ENCODE measurements at regions of chr5 and their contacts with region 1.

Region 1: GRCh38 chr5:122019919-122020590 is 58.0 kb downstream of the LOX start:
- DNase-seq: no peak
- H3K4me3 Mint-ChIP-seq: no peak overlapping the region
- H3K27ac Mint-ChIP-seq: no peak overlapping the region
- H3K4me1 Mint-ChIP-seq: peaks cover 9% of the 10 kb centered on the region
- H3K27me3 Mint-ChIP-seq: no peaks in the 10 kb centered on the region

Region 2: GRCh38 chr5:121976979-121977378 is 43.1 kb before region 1 on chr5:
- CTCF ChIA-PET with region 1: no interaction called
- intact Hi-C with region 1: loop called (anchors 1 kb)
- DNase-seq: no peak
- H3K4me3 Mint-ChIP-seq: no peak overlapping the region
- H3K27ac Mint-ChIP-seq: no peak overlapping the region
- H3K4me1 Mint-ChIP-seq: peaks cover 38% of the 10 kb centered on the region
- H3K27me3 Mint-ChIP-seq: no peaks in the 10 kb centered on the region

Region 3: GRCh38 chr5:121987685-121988073 is 32.4 kb before region 1 on chr5:
- CTCF ChIA-PET with region 1: interaction called, 4 read pairs
- intact Hi-C with region 1: loop called (anchors 1 kb)
- DNase-seq: no peak
- H3K4me3 Mint-ChIP-seq: no peak overlapping the region
- H3K27ac Mint-ChIP-seq: no peak overlapping the region
- H3K4me1 Mint-ChIP-seq: peaks cover 15% of the 10 kb centered on the region
- H3K27me3 Mint-ChIP-seq: no peaks in the 10 kb centered on the region

Region 4: DNA sequence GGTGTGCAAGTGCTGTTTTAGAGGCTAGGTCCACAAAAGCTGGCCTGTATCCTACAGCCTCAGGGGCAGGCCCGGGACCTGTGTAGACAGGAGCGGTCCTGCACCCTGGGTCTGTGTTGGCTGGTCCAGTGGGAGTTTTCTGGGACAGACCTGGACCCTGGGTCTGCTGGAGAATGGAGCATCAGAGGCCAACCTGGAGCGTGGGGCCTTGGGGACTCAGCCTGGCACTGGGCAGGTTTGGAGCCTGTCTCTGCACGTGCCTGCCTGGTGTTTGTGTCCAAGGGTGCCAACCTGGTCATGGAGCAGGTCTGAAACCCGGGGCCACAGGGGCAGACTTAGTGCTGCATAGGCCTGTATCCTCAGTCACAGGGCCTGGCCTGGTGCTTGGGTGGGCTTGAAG is 12.5 kb before region 1 on chr5:
- CTCF ChIA-PET with region 1: no interaction called
- intact Hi-C with region 1: loop called (anchors 1 kb)
- DNase-seq: no peak
- H3K4me3 Mint-ChIP-seq: no peak overlapping the region
- H3K27ac Mint-ChIP-seq: no peak overlapping the region
- H3K4me1 Mint-ChIP-seq: peaks cover 24% of the 10 kb centered on the region
- H3K27me3 Mint-ChIP-seq: no peaks in the 10 kb centered on the region

Region 5: GRCh38 chr5:122180863-122181548 is 161.0 kb after region 1 on chr5:
- CTCF ChIA-PET with region 1: no interaction called
- intact Hi-C with region 1: loop called (anchors 2 kb)
- DNase-seq: no peak
- H3K4me3 Mint-ChIP-seq: no peak overlapping the region
- H3K27ac Mint-ChIP-seq: peak overlapping the region; percentile 30
- H3K4me1 Mint-ChIP-seq: peaks cover 17% of the 10 kb centered on the region
- H3K27me3 Mint-ChIP-seq: peaks cover 26% of the 10 kb centered on the region

Measured in activated naive CD4-positive, alpha-beta T cell treated with anti-CD3 and anti-CD28 coated beads for 36 hours (primary cell).